ENCODE measurements at regions of chr1 and their contacts with region 1.

Region 1: GRCh38 chr1:33094971-33095604 is 14.1 kb downstream of the AZIN2 start:
- DNase-seq: peak; percentile 55 to 60
- H3K4me3 ChIP-seq: no peak overlapping the region
- H3K27ac ChIP-seq: no peak overlapping the region
- H3K4me1 ChIP-seq: peaks cover 0 to 3% of the 10 kb centered on the region in 2 donors
- H3K27me3 ChIP-seq: no peaks in the 10 kb centered on the region
- CTCF ChIP-seq: peak; percentile 90 to 96 (median 92)
- POLR2A ChIP-seq: no peak

Region 2: DNA sequence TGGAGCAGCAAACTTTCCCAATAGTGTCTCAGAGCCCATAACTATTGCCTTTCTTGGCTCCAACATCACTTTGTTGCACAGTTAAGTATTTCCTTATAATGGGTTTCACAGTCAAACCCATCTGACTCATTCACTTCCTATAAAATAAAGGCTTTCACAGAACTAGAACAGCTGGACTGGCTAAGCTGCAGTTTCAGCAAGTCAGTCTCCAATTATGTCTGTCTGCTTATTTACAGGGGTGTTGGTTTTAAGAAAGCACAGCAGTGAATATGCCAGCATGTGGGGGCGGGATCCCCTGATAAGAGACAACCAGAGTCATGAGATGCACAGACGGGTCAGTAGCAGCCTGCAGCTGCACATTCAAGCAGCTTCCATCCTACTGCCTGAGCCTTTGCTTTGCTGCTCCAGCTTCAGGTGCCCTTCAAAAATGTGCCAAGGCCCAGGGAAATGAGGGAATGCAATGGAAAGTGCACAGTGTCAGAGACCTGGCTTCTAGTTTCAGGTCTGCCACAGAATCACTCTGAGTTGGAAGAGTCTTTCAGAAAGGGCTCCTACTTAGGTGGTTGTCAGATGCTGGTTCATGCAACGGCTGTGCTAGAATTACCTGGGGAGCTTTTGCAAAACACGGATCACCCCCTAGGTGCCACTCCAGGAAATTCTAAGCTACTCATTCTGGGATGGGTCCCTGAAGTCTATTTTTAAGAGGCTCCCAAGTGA is 155.3 kb before region 1 on chr1:
- intact Hi-C with region 1: loop called (anchors 10 kb)
- DNase-seq: no peak
- H3K4me3 ChIP-seq: no peak overlapping the region
- H3K27ac ChIP-seq: peak overlapping the region in 1 of 2 donors; percentile 46
- H3K4me1 ChIP-seq: no peaks in the 10 kb centered on the region
- H3K27me3 ChIP-seq: no peaks in the 10 kb centered on the region
- CTCF ChIP-seq: no peak
- POLR2A ChIP-seq: no peak

Region 3: GRCh38 chr1:33036526-33037503 is 58.3 kb before region 1 on chr1 and contains the start of gene AK2:
- intact Hi-C with region 1: no loop called
- DNase-seq: peak; percentile 95
- H3K4me3 ChIP-seq: peak within 1 kb of the TSS; percentile 77 to 90 (median 79)
- H3K27ac ChIP-seq: peak within 1 kb of the TSS; percentile 87 to 89
- H3K4me1 ChIP-seq: peaks cover 6 to 17% of the 10 kb centered on the region in 2 donors
- H3K27me3 ChIP-seq: no peaks in the 10 kb centered on the region
- CTCF ChIP-seq: no peak
- POLR2A ChIP-seq: peak; percentile 71
- total RNA-seq, gene AK2: 124 to 483 (median 280) TPM

Region 4: GRCh38 chr1:33060579-33061083 is 34.5 kb before region 1 on chr1:
- intact Hi-C with region 1: no loop called
- DNase-seq: peak in 1 of 2 donors; percentile 83
- H3K4me3 ChIP-seq: no peak overlapping the region
- H3K27ac ChIP-seq: peak overlapping the region; percentile 43 to 68
- H3K4me1 ChIP-seq: peaks cover 0 to 7% of the 10 kb centered on the region in 2 donors
- H3K27me3 ChIP-seq: no peaks in the 10 kb centered on the region
- CTCF ChIP-seq: no peak
- POLR2A ChIP-seq: no peak